Left colon (tissue), 2 donors: ENCODE measurements at regions of chr1 and their contacts with region 1.

Region 1: DNA sequence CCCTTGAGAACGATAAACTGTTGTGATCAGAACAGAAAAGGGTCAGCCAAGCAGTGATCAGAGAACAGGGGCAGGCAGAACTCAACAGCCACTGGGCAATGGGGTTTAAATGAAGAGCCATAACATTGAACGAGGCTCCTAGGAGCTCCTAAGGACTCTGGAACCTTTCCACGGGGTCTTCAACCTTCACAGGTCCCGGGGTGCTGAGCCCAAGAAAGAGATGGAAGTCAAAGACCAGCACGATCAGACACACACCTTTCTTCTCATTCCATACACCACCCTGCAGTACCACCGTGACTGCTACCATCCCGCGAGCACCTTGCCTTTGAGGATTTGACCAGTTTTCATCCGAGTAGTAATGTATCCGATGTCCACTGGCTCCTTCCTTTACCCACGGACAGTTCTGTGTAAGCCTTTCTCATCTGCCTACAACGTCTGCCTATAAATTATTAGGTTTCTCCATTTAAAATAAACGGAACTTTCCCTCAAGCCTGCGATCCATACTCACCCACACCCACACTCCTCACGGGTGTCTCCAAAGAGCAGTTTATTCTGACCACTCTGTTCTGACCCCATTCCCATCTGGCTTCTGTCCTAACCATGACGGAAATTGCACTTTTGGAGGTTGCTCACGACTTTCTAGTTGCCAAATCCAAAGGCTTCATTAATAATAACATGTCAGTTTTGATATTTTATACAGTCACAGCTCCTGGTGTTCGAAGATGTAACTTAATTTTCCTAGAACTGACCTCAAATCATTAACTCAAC is 16.8 kb upstream of the HHAT start:
- DNase-seq: no peak
- ATAC-seq: no peak

Region 2: GRCh38 chr1:209784265-209785169 is 527.4 kb before region 1 on chr1 and contains the start of gene C1orf74:
- intact Hi-C with region 1: no loop called
- DNase-seq: peak; percentile 99
- ATAC-seq: peak; percentile 95
- total RNA-seq, gene C1orf74: 2.0 to 4.5 TPM

Region 3: DNA sequence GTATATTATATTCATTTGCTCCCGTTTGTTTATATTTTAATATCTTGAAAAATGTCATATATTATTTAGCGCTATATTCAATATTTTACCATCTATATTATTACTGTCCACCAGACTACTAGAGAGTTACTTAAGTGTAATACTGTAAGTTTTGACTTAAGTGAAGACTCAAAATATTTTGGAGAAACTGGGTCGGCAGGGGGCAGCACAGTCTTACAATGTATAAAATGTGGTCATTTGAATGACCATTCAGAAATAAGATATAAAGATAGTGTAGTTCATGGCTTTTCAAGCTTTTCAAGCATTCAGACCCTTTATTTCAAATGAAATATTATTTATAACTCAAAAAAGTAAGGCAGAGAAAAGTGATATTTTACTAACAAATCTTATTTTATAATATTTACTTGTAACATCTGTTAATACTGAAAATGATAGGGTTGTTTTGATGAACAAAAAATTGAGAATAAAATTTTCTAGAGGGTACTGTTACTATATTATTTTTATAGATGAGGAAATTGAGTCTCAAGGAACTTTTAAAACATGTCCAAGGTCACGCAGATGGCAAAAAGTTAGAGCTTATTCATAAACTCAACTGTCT is 168.3 kb before region 1 on chr1:
- intact Hi-C with region 1: loop called (anchors 2 to 10 kb)
- DNase-seq: peak; percentile 39 to 89
- ATAC-seq: peak; percentile 46

Region 4: DNA sequence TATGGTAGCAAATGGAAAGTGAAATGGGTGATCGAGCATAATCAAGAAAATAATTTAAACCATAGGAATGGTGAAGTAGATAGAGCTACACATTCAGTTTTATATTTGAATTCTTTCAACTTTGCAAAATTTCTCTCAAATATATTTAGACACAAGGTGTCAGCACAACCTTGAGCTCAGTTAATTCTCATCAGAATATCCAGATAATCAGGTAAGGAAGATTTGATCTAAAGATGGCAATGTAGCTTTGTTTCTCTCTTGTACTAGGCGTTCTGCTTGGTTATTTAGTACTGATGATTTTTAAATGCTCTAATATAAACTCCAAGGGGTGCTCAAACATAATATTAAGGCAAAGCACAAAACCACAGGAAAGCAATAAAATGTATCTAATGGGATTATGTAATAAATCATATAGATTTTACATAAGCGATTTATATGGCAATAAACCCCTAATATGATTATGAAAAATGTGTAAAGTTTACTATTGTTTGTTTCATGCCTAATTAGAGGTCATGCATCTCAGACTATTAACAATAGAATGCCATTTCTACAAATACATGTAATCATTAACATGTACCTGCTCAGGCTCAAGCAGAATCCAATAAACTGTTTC is 111.7 kb before region 1 on chr1:
- intact Hi-C with region 1: loop called in 1 of 2 experiments (anchors 5 kb)
- DNase-seq: no peak
- ATAC-seq: peak; percentile 34

Region 5: GRCh38 chr1:210272666-210273065 is 39.2 kb before region 1 on chr1:
- intact Hi-C with region 1: no loop called
- DNase-seq: no peak
- ATAC-seq: no peak